ENCODE measurements at regions of chr15 and their contacts with region 1.

Region 1: DNA sequence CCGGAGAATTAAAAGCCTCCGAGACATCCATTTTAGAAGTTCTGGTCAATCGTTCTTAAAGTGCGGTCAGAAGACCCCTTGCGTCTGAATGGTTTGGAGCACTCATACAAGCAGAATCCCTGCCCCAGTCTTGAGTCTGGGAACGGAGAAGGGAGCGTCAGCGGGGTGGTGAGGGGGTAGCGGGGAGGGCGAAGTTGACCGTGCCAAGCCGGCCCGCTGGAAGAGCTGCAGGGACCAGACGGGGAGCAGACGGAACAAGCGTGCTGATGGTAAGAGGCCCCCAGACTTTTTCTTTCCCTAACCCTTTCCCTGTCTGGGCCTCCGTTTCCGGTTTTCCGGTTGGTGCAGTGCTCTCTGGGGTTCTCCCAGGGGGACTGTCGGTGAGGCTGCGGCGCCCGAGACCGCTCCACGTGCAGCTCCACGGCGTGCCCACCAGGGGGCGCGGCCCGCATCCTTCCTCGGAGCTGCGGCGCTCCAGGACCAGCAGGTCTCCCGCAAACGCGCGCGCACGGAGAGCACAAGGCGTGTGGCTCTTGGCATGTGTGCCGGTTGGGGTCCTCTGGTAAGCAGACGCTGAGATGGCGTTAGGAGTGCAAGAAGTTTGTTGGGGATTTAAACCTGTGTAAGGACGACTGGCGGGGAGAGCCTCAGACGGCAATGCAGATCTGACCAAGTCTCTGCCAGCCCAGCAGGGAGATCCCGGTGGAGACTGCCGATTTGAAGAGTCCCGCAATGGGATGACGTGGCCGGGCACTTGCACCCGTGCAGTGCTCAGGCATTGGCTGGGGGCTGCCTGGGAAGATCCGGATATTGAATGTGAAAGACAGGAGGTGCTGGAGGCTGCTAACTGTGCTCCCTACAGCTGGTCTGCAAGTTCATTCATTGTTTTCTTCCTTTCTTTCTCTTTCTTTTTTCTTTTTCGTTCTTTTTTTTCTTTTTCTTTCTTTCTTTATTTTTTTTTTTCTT is 19.2 kb upstream of the CORO2B start:
- DNase-seq: peak; percentile 78
- H3K4me3 ChIP-seq: peak overlapping the region in 2 of 3 experiments; percentile 19 to 46
- H3K27ac ChIP-seq: no peak overlapping the region
- H3K4me1 ChIP-seq: peaks cover 4% of the 10 kb centered on the region
- H3K27me3 ChIP-seq: peaks cover 4 to 7% of the 10 kb centered on the region in 2 experiments
- CTCF ChIP-seq: peak; percentile 98 to 99
- POLR2A ChIP-seq: no peak

Region 2: DNA sequence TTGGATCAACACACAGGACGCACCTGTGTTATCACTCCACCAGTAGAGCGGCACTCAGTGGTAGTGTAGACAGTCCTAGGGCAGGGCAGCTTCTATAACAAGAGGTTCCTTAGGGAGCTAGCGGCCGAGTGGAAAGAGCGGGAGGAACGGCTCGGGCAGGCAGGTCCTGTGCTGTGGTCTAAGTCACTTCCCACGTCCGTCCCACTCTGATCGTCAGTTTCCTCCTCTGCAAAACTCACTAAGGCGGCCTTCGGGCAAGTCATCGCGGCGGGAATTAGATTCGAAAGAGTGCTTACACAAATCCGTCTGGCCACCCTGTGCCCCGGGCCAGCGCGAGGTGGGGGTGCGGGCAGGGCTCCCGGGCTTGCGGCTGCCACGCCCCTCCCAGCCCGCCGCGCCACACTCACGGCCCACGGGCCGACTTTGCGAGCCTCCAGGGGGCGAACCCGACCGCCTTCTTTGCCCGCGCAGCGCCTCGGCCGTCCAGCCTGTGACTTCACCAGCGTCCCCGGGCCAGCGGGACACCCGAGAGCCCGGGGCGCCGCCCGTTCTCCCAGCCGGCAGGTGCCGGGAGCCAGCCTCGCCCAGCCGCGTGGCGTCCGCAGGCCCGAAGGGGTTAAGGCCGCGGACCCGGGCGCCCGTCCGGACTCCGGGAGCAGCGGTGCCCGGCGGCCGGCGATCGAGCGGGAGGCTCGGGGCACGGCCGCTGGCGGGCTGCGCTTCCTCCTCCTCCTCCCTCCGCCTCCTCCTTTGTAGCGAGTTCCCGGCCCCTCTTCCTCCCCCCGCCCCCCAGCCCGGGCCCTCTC is 18.7 kb after region 1 on chr15:
- CTCF ChIA-PET with region 1: interaction called, 52 read pairs
- POLR2A ChIA-PET with region 1: no interaction called
- dilution Hi-C with region 1: no loop called
- intact Hi-C with region 1: loop called (anchors 1 kb)
- DNase-seq: peak; percentile 66
- H3K4me3 ChIP-seq: peak overlapping the region; percentile 30 to 44 (median 35)
- H3K27ac ChIP-seq: no peak overlapping the region
- H3K4me1 ChIP-seq: peaks cover 9% of the 10 kb centered on the region
- H3K27me3 ChIP-seq: peaks cover 19 to 28% of the 10 kb centered on the region in 2 experiments
- CTCF ChIP-seq: peak; percentile 25 to 67
- POLR2A ChIP-seq: no peak

Region 3: DNA sequence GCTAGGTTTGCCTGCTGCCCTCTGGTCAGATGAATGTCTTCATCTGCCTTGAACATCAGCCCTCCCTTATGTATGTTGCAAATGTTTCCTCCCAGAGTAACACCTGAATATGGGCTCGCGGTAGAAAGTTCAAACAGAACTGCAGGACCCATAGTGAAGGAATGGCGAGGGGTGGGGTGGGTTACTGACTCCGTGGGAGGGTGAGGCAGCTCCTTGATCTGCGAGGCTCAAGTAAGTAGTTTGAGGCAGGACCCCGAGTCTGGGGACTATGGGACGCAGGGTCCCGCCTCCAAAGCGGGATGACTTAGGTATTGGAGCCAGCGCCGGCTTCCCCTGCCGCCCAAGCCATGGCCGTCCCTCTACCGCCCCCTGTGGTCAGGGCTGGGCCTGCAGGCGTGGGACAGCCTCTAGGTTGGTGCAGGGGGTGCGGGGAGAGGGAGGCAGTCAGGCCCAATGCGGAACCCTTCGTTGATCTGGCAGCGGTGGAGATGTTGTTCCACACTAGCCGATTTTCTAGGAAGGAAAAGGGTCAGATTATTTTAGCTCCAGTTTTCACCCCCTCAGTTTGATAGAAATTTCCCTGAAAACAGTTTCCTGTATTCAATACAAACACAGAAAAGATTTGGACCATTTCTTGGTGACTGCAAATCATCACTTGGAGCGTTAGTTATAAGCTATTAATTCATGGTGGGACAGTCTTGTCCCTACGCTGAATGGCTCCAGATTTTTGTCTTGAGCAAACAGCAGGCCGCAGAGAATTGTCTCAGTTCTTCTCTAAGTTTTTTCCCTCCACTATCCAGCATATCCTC is 91.5 kb after region 1 on chr15:
- CTCF ChIA-PET with region 1: interaction called, 45 read pairs
- POLR2A ChIA-PET with region 1: no interaction called
- dilution Hi-C with region 1: no loop called
- intact Hi-C with region 1: loop called (anchors 1 kb)
- DNase-seq: peak; percentile 45
- H3K4me3 ChIP-seq: no peak overlapping the region
- H3K27ac ChIP-seq: no peak overlapping the region
- H3K4me1 ChIP-seq: no peaks in the 10 kb centered on the region
- H3K27me3 ChIP-seq: peaks cover 0 to 4% of the 10 kb centered on the region in 2 experiments
- CTCF ChIP-seq: peak; percentile 93 to 96
- POLR2A ChIP-seq: no peak

Region 4: DNA sequence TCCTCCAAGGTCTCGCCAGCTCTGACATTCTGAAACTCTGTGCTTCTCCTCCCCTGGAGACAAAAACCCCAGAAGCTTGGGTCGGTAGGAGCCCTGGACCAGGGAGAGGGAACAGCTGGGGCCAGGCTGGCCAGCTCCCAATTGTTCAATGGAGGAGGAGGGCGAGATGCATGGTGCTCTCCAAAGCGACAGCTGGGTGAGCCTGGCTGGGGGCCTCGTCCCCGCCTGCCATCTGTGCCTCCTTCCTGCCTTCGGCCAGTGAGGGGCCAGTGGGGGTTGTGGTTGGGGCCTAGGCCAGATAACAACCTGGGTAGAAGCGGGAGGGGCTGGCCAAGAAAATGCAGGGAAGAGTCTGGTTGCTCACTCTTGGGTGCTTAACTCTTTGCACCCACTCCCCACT is 98.5 kb after region 1 on chr15:
- CTCF ChIA-PET with region 1: interaction called, 26 read pairs
- POLR2A ChIA-PET with region 1: no interaction called
- dilution Hi-C with region 1: no loop called
- intact Hi-C with region 1: no loop called
- DNase-seq: no peak
- H3K4me3 ChIP-seq: no peak overlapping the region
- H3K27ac ChIP-seq: no peak overlapping the region
- H3K4me1 ChIP-seq: no peaks in the 10 kb centered on the region
- H3K27me3 ChIP-seq: peaks cover 0 to 3% of the 10 kb centered on the region in 2 experiments
- CTCF ChIP-seq: no peak
- POLR2A ChIP-seq: no peak

Region 5: GRCh38 chr15:68666120-68666811 is 106.6 kb after region 1 on chr15:
- CTCF ChIA-PET with region 1: interaction called, 728 read pairs
- POLR2A ChIA-PET with region 1: no interaction called
- dilution Hi-C with region 1: no loop called
- intact Hi-C with region 1: no loop called
- DNase-seq: peak; percentile 78
- H3K4me3 ChIP-seq: no peak overlapping the region
- H3K27ac ChIP-seq: no peak overlapping the region
- H3K4me1 ChIP-seq: peaks cover 2% of the 10 kb centered on the region
- H3K27me3 ChIP-seq: peaks cover 0 to 2% of the 10 kb centered on the region in 2 experiments
- CTCF ChIP-seq: no peak
- POLR2A ChIP-seq: no peak

Region 6: GRCh38 chr15:68924866-68925560 is 365.4 kb after region 1 on chr15:
- CTCF ChIA-PET with region 1: interaction called, 53 read pairs
- POLR2A ChIA-PET with region 1: no interaction called
- dilution Hi-C with region 1: no loop called
- intact Hi-C with region 1: loop called (anchors 1 kb)
- DNase-seq: peak; percentile 75
- H3K4me3 ChIP-seq: no peak overlapping the region
- H3K27ac ChIP-seq: no peak overlapping the region
- H3K4me1 ChIP-seq: no peaks in the 10 kb centered on the region
- H3K27me3 ChIP-seq: peaks cover 5 to 37% of the 10 kb centered on the region in 2 experiments
- CTCF ChIP-seq: peak; percentile 72 to 78
- POLR2A ChIP-seq: no peak

Region 7: DNA sequence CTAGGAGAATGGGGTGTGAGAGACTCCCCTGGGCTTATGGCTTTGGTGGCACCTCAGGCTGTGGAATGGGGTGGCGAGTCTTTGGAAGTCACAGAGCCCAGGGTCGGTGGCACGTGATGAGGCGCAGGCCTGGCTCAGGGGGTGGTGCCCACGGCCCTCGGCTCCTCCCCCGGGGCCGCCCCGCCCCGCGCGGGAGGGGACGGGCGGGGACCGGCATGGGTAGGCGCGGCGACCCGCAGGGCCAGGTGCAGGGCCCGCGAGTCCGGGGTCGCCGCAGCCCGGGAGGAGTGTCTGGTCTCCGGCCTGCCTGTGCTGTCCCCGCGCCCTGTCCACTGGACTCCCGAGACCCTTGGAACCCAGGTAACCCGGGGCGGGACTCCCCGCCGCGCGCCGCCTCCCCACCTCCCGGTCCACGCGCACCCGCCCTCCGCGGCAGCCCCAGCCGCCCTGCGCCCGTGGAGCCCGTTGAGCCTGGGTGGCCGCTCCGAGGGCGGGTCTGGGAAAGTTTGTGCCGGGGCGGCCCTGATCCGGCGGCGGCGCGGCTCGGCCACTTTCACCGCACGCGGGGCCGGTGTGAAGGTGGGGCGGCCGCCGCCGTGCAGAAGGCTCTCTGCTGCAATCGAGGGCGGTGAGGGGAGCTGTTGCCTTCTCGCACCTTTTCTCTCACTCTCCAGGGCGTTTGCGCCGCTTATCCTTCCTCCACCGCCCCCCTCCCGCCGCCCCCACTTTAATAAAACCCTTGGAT is 739.2 kb after region 1 on chr15 and contains the start of gene PAQR5:
- CTCF ChIA-PET with region 1: no interaction called
- POLR2A ChIA-PET with region 1: no interaction called
- dilution Hi-C with region 1: no loop called
- intact Hi-C with region 1: no loop called
- DNase-seq: no peak
- H3K4me3 ChIP-seq: peak within 1 kb of the TSS; percentile 22 to 38 (median 32)
- H3K27ac ChIP-seq: no peak within 1 kb of the TSS
- H3K4me1 ChIP-seq: no peaks in the 10 kb centered on the region
- H3K27me3 ChIP-seq: peaks cover 24 to 27% of the 10 kb centered on the region in 2 experiments
- CTCF ChIP-seq: no peak
- POLR2A ChIP-seq: no peak
- total RNA-seq, gene PAQR5: 0.09 TPM in 1 of 2 replicates, not detected in the other